Posterior cingulate gyrus (tissue), 11 donors: ENCODE measurements at regions of chr12 and their contacts with region 1.

Region 1: GRCh38 chr12:89947437-89948270 is 239.0 kb upstream of the ATP2B1 start:
- DNase-seq: no peak

Region 2: DNA sequence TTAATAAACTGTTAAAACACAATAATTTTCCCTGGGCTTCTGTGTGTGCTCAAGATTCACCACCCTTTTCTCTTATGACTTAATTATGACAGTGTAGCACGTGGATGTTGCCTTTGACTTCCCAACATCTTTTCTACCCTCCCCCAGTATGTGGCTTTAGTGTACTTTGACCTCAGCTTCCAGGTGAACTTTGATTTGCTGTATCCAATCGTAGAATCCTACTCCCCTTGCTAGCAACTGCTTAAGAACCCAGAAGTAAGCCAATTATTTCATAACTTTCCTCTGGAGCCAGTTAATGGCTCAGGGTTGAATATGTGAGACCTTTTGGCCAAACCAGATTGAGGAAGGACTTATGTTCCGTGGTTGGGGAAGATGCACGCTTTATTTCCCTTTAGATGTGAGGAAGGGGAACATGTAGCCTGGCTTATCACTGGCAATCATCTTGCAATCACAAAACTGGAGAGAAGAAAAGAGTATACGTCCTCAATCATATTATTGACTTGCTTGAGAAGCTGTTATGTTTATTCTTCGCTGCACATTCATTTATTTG is 20.6 kb after region 1 on chr12:
- intact Hi-C with region 1: loop called (anchors 1 kb)
- DNase-seq: no peak